A549 (cell line): ENCODE measurements at regions of chr5 and their contacts with region 1.

Region 1: GRCh38 chr5:71475788-71476384 is 20.4 kb downstream of the BDP1 start:
- DNase-seq: peak; percentile 38 to 64
- ATAC-seq: peak; percentile 93 to 94
- H3K4me3 ChIP-seq: no peak overlapping the region
- H3K27ac ChIP-seq: peak overlapping the region in 1 of 2 experiments; percentile 48; a peak in 2 of 6 replicates
- H3K4me1 ChIP-seq: peaks cover 14% of the 10 kb centered on the region
- CTCF ChIP-seq: peak; percentile 77
- EP300 ChIP-seq: no peak
- POLR2A ChIP-seq: no peak
- RAD21 ChIP-seq: peak; percentile 47 to 55

Region 2: DNA sequence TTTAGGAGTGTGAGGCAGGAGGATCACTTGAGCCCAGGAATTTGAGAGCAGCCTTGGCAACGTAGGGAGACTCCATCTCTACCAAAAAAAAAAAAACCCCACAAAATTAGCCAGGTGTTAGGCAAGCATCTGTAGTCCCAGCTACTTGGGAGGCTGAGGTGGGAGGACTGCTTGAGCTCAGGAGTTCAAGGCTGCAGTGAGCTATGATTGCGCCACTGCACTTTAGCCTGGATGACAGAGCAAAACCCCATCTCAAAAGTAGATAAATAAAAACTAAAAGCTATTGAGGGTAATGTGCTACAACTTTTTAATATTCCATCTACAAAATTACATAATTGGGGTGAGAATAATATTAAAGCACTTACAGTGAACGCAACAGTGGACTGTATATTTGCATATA is 14.5 kb before region 1 on chr5:
- CTCF ChIA-PET with region 1: interaction called, 31 read pairs
- POLR2A ChIA-PET with region 1: no interaction called
- DNase-seq: no peak
- ATAC-seq: no peak
- H3K4me3 ChIP-seq: no peak overlapping the region
- H3K27ac ChIP-seq: no peak overlapping the region
- H3K4me1 ChIP-seq: peaks cover 14% of the 10 kb centered on the region; the same call in 1 of the 3 replicates
- CTCF ChIP-seq: no peak
- EP300 ChIP-seq: no peak
- POLR2A ChIP-seq: no peak
- RAD21 ChIP-seq: no peak

Region 3: DNA sequence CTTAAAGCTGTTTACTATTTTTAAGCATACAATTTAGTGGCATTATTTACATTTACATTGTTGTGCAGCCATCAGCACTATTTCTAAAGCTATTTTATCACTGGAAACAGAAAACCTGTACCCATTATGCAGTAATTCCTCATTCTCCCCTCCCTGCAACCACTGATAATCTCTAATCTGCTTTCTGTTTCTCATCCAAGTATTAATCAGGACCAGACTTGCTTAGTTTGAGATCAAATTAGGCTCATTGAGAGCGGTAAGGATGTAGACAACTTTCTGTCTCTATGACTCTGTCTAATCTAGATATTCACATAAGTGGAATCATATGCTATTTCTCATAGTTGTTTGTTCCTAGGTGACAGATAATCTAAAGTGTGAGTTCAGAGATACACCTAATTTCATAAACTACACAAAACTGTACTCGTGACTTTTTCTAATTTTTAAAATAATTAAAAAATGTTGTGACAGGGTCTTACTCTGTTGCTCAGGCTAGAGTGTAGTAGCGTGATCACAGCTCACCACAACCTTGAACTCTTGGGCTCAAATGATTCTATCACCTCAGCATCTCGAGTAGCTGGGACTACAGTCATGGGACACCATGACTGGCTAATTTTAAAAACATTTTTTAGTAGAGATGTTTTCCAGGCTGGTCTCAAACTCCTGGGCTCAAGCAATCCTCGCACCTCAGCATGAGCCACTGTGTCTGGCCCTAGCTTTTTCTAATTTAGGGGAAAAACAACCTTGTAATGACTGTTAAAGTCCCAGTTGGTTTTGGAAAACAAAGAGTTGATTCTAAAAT is 17.1 kb after region 1 on chr5:
- CTCF ChIA-PET with region 1: interaction called, 30 read pairs
- POLR2A ChIA-PET with region 1: no interaction called
- DNase-seq: no peak
- ATAC-seq: no peak
- H3K4me3 ChIP-seq: no peak overlapping the region
- H3K27ac ChIP-seq: no peak overlapping the region
- H3K4me1 ChIP-seq: no peaks in the 10 kb centered on the region
- CTCF ChIP-seq: no peak
- EP300 ChIP-seq: no peak
- POLR2A ChIP-seq: no peak
- RAD21 ChIP-seq: no peak

Region 4: GRCh38 chr5:71740015-71740753 is 264.3 kb after region 1 on chr5:
- CTCF ChIA-PET with region 1: no interaction called
- POLR2A ChIA-PET with region 1: no interaction called
- DNase-seq: no peak
- ATAC-seq: no peak
- H3K4me3 ChIP-seq: no peak overlapping the region
- H3K27ac ChIP-seq: no peak overlapping the region
- H3K4me1 ChIP-seq: no peaks in the 10 kb centered on the region
- CTCF ChIP-seq: no peak
- EP300 ChIP-seq: no peak
- POLR2A ChIP-seq: no peak
- RAD21 ChIP-seq: no peak

Region 5: GRCh38 chr5:71757590-71758543 is 282.0 kb after region 1 on chr5:
- CTCF ChIA-PET with region 1: interaction called, 73 read pairs
- POLR2A ChIA-PET with region 1: no interaction called
- DNase-seq: peak; percentile 40 to 80
- ATAC-seq: peak; percentile 100
- H3K4me3 ChIP-seq: peak overlapping the region; percentile 27; the same call in 1 of the 3 replicates
- H3K27ac ChIP-seq: peak overlapping the region; percentile 16 to 24; a peak in 1 of 6 replicates
- H3K4me1 ChIP-seq: peaks cover 7% of the 10 kb centered on the region; the same call in 2 of the 3 replicates
- CTCF ChIP-seq: peak; percentile 90
- EP300 ChIP-seq: no peak
- POLR2A ChIP-seq: no peak
- RAD21 ChIP-seq: peak; percentile 95 to 96

Region 6: DNA sequence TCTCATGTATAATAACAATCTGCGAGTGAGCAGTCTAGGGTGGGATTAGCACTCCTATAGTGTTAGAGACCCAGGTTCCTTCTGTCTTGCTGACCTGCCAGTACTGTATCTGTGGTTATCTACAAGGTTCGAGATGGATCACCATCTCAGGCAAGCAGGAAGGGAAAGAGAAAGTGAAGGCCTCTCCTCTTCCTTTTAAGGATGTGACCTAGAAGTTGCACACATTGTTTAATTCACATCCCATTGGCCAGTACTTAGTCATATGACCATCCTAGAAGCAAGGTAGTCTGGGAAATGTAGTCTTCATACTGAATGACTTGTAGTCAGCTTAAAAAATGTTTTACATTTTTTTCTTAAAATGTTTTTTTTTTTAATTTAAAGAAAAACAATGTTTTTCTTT is 411.8 kb after region 1 on chr5:
- CTCF ChIA-PET with region 1: no interaction called
- POLR2A ChIA-PET with region 1: no interaction called
- DNase-seq: peak; percentile 72 to 87
- ATAC-seq: peak; percentile 72 to 93
- H3K4me3 ChIP-seq: no peak overlapping the region
- H3K27ac ChIP-seq: peak overlapping the region; percentile 34 to 55; a peak in 3 of 6 replicates
- H3K4me1 ChIP-seq: peaks cover 32% of the 10 kb centered on the region
- CTCF ChIP-seq: no peak
- EP300 ChIP-seq: no peak
- POLR2A ChIP-seq: no peak
- RAD21 ChIP-seq: no peak

Region 7: GRCh38 chr5:72441861-72442540 is 966.1 kb after region 1 on chr5:
- CTCF ChIA-PET with region 1: no interaction called
- POLR2A ChIA-PET with region 1: no interaction called
- DNase-seq: peak; percentile 34 to 54
- ATAC-seq: peak; percentile 55 to 71; a peak in 4 of 6 replicates
- H3K4me3 ChIP-seq: no peak overlapping the region
- H3K27ac ChIP-seq: peak overlapping the region; percentile 9 to 73; a peak in 4 of 6 replicates
- H3K4me1 ChIP-seq: peaks cover 24% of the 10 kb centered on the region
- CTCF ChIP-seq: no peak
- EP300 ChIP-seq: no peak
- POLR2A ChIP-seq: no peak
- RAD21 ChIP-seq: no peak